ENCODE measurements at regions of chr4 and their contacts with region 1.

Region 1: DNA sequence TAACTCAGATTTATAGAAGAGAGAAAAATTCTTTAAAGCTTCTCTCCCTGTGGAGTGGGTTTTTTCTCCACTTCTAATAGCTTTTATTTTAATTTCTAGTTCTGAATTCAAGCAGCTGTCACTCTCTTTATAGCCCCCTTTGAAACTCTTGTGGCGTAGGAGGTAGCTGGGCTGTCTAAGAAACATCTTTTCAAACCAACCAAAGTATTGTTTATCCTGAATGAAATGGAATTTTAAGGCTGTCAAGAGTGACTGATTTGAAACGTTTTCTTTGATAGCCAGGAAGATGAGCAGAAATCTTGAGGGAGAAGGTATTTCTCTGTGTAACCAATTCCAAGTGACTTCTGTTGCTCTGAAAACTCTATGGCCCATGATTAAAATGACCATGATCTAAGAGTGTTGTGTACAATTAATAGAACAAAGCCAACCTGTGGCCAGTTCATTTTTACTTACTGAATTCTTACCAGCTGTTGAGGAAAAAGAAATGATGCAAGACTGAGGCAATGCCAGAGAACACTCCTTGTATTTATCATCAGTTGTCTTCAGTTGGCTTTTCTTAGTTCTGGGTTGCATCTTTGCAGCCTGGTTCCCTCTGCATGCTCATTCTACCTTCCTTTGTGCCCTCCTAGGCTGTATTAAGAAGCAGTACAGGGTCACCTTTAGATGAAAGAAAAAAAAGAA is 298.4 kb downstream of the ARHGAP10 start:
- DNase-seq: no peak
- ATAC-seq: no peak
- H3K4me3 ChIP-seq: no peak overlapping the region
- H3K4me3 Mint-ChIP-seq: no peak overlapping the region
- H3K27ac ChIP-seq: no peak overlapping the region
- H3K27ac Mint-ChIP-seq: no peak overlapping the region
- H3K4me1 ChIP-seq: no peaks in the 10 kb centered on the region
- H3K4me1 Mint-ChIP-seq: no peaks in the 10 kb centered on the region
- H3K27me3 ChIP-seq: no peaks in the 10 kb centered on the region
- H3K27me3 Mint-ChIP-seq: no peaks in the 10 kb centered on the region

Region 2: GRCh38 chr4:148054275-148054674 is 23.9 kb after region 1 on chr4:
- CTCF ChIA-PET with region 1: interaction called, 3 to 4 read pairs
- POLR2A ChIA-PET with region 1: interaction called in 1 of 2 experiments, 19 read pairs
- DNase-seq: peak in 1 of 35 experiments; percentile 46
- ATAC-seq: no peak
- H3K4me3 ChIP-seq: no peak overlapping the region
- H3K4me3 Mint-ChIP-seq: peak overlapping the region in 1 of 3 donors; percentile 82
- H3K27ac ChIP-seq: peak overlapping the region; percentile 85
- H3K27ac Mint-ChIP-seq: peak overlapping the region; percentile 88 to 99
- H3K4me1 ChIP-seq: peaks cover 46 to 70% of the 10 kb centered on the region in 2 experiments
- H3K4me1 Mint-ChIP-seq: peaks cover 85 to 89% (median 88%) of the 10 kb centered on the region in 3 donors
- H3K27me3 ChIP-seq: no peaks in the 10 kb centered on the region
- H3K27me3 Mint-ChIP-seq: no peaks in the 10 kb centered on the region